Posterior vena cava (tissue), 2 donors: ENCODE measurements at regions of chr13 and their contacts with region 1.

Region 1: GRCh38 chr13:40666045-40666904 is at the start of gene FOXO1:
- DNase-seq: peak; percentile 96
- total RNA-seq, gene FOXO1: 34.4 to 42.5 TPM

Region 2: DNA sequence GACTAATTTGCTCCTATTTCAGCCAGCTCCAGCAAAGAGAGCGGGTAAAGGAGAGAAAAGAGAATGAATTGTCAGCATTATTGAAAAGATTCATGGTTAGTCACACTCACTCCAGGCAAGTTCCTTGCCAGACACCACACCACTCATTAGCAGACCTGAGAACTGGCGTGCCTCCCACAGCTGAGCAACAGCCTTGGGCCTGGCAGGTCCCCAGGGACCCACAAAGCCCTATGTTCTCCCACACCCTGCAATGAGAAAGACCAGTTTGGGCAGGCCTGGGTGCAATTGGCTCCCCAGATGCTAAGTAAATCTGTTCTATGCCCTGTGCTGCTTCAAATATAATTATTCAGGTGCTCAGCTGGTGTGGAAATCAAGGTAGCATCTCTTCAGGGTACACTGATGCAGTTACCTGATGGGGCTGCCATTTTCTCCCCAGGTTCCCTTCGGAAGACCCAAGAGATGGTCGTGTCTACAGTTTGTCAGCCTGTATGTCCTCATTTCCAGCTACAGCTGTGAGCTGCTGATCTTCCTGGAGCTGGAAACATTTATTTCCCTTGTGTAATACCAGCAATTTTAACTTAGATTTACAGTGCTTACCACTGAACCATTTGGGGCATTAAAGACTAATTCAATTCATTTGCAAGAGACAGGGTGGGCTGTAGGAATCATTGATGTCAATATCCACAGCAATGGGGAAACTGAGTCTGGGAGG is 605.8 kb before region 1 on chr13:
- intact Hi-C with region 1: loop called (anchors 2 to 10 kb)
- DNase-seq: peak; percentile 87

Region 3: DNA sequence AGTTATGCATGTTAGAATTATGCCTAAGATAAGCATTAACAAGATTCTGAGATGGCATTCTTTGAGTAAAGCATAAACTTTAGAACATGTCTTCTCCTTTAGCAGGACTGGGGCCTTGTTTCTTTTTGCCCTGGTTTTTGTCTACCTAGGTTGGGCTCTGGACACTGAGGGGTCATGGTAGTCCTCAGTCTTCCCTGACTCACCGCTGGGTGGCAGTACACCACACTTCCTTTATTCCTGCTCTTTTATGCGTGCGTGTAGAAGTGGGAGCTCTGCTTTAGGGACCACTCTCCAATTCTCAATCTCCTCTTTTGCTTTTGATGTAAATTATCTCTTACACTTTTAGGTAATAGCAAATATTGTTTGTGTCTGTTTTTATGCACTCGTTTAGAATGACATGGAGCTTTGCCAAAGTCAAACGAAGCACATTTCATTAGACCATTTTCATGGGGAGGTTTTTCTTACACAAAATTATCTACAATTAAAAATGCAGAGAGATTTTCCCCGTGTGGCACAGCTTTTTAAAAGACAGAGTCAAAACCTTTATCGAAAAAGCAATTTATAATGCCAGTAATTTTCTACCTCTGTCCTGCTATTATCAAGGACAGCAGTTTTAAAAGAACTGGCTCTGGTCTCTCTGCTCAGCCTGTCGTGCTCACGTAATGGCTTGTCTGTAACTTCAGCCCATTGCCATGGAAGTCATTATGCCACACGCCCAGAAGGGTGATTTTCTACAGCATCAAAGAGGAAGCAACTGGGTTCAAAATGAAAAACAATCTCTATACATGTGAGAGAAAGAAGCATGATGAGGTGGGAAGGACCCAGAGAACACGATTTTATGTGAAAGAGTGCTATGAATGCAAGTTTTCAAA is 596.9 kb before region 1 on chr13:
- intact Hi-C with region 1: loop called in 1 of 2 experiments (anchors 10 kb)
- DNase-seq: peak; percentile 89

Region 4: GRCh38 chr13:40732658-40733057 is 66.4 kb after region 1 on chr13:
- intact Hi-C with region 1: no loop called
- DNase-seq: no peak